Motor neuron (in vitro differentiated cells): ENCODE measurements at regions of chr18 and their contacts with region 1.

Region 1: GRCh38 chr18:51668101-51668500 is 470.6 kb upstream of the MEX3C start:
- ATAC-seq: peak; percentile 55 to 78 (median 72)
- H3K4me3 ChIP-seq: no peak overlapping the region
- H3K27ac ChIP-seq: no peak overlapping the region
- H3K4me1 ChIP-seq: peaks cover 16 to 29% of the 10 kb centered on the region in 2 donors

Region 2: GRCh38 chr18:51110073-51110803 is 557.9 kb before region 1 on chr18:
- in situ Hi-C with region 1: loop called in 1 of 9 experiments (anchors 25 kb)
- ATAC-seq: peak; percentile 75 to 99 (median 92)
- H3K4me3 ChIP-seq: no peak overlapping the region
- H3K27ac ChIP-seq: no peak overlapping the region
- H3K4me1 ChIP-seq: no peaks in the 10 kb centered on the region

Region 3: DNA sequence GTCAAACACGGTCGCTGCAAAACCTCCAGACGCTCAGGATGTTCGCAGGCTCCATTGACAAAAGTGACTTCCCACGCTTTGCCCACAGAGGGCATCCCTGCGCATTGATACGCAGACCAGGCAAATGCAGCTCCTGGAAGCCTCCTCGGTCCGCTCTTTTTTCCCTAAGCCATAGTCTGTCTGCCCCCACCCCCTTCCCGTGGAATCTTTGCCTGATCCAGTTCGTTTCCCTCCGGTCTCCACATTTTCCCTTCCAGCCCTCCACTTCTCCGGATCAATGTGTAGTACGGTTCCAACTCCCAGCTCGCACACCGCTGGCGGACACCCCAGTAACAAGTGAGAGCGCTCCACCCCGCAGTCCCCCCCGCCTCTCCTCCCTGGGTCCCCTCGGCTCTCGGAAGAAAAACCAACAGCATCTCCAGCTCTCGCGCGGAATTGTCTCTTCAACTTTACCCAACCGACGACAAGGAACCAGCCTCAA is 671.8 kb after region 1 on chr18 and contains the start of gene DCC:
- in situ Hi-C with region 1: loop called in 2 of 9 experiments (anchors 25 kb)
- ATAC-seq: peak in 7 of 8 experiments; percentile 23 to 77 (median 74)
- H3K4me3 ChIP-seq: peak within 1 kb of the TSS; percentile 47 to 59 (median 54)
- H3K27ac ChIP-seq: peak within 1 kb of the TSS; percentile 44 to 82
- H3K4me1 ChIP-seq: peaks cover 9 to 12% of the 10 kb centered on the region in 2 donors
- total RNA-seq, gene DCC: 0.04 to 66.0 (median 48.3) TPM in 6 of 8 experiments, not detected in the others

Region 4: GRCh38 chr18:52694804-52695203 is 1026.7 kb after region 1 on chr18:
- in situ Hi-C with region 1: loop called in 1 of 9 experiments (anchors 25 kb)
- ATAC-seq: peak in 3 of 8 experiments; percentile 31 to 44 (median 37)
- H3K4me3 ChIP-seq: no peak overlapping the region
- H3K27ac ChIP-seq: no peak overlapping the region
- H3K4me1 ChIP-seq: peaks cover 0 to 4% of the 10 kb centered on the region in 2 donors

Region 5: GRCh38 chr18:53380063-53380639 is 1712.0 kb after region 1 on chr18:
- in situ Hi-C with region 1: loop called in 1 of 9 experiments (anchors 25 kb)
- ATAC-seq: peak; percentile 29 to 85 (median 54)
- H3K4me3 ChIP-seq: no peak overlapping the region
- H3K27ac ChIP-seq: no peak overlapping the region
- H3K4me1 ChIP-seq: peaks cover 0 to 10% of the 10 kb centered on the region in 2 donors